CD8-positive, alpha-beta T cell (primary cell): ENCODE measurements at regions of chr18 and their contacts with region 1.

Region 1: GRCh38 chr18:55090566-55091188 is 131.4 kb upstream of the CCDC68 start:
- DNase-seq: no peak
- ATAC-seq: no peak
- H3K4me3 ChIP-seq: no peak overlapping the region
- H3K4me3 Mint-ChIP-seq: no peak overlapping the region
- H3K27ac ChIP-seq: no peak overlapping the region
- H3K27ac Mint-ChIP-seq: no peak overlapping the region
- H3K4me1 ChIP-seq: no peaks in the 10 kb centered on the region
- H3K4me1 Mint-ChIP-seq: no peaks in the 10 kb centered on the region
- H3K27me3 ChIP-seq: no peaks in the 10 kb centered on the region
- H3K27me3 Mint-ChIP-seq: no peaks in the 10 kb centered on the region
- CTCF ChIP-seq: no peak

Region 2: DNA sequence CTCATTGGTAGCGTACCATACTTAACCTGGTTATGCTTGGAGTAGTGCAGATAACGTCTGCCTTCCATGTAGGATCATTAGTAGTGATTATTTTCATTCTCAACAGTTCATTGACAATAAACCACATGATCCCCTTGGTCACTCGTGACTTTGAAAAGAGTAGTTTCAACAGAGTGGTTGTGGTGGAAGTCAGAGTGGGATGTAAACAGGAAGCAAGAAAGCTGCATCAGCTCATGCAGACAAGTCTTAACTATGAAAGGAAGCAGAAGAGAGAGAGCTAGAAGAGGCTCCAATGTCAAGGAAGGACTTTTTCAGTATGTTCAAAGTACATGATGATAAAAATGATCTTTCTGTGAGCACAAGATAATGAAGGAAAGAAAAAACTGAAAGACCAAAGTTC is 1153.6 kb before region 1 on chr18:
- CTCF ChIA-PET with region 1: no interaction called
- POLR2A ChIA-PET with region 1: no interaction called
- intact Hi-C with region 1: loop called in 1 of 2 experiments (anchors 5 kb)
- DNase-seq: no peak
- ATAC-seq: no peak
- H3K4me3 ChIP-seq: no peak overlapping the region
- H3K4me3 Mint-ChIP-seq: no peak overlapping the region
- H3K27ac ChIP-seq: no peak overlapping the region
- H3K27ac Mint-ChIP-seq: no peak overlapping the region
- H3K4me1 ChIP-seq: no peaks in the 10 kb centered on the region
- H3K4me1 Mint-ChIP-seq: no peaks in the 10 kb centered on the region
- H3K27me3 ChIP-seq: no peaks in the 10 kb centered on the region
- H3K27me3 Mint-ChIP-seq: no peaks in the 10 kb centered on the region
- CTCF ChIP-seq: no peak